Caco-2 (cell line): ENCODE measurements at regions of chr16 and their contacts with region 1.

Region 1: DNA sequence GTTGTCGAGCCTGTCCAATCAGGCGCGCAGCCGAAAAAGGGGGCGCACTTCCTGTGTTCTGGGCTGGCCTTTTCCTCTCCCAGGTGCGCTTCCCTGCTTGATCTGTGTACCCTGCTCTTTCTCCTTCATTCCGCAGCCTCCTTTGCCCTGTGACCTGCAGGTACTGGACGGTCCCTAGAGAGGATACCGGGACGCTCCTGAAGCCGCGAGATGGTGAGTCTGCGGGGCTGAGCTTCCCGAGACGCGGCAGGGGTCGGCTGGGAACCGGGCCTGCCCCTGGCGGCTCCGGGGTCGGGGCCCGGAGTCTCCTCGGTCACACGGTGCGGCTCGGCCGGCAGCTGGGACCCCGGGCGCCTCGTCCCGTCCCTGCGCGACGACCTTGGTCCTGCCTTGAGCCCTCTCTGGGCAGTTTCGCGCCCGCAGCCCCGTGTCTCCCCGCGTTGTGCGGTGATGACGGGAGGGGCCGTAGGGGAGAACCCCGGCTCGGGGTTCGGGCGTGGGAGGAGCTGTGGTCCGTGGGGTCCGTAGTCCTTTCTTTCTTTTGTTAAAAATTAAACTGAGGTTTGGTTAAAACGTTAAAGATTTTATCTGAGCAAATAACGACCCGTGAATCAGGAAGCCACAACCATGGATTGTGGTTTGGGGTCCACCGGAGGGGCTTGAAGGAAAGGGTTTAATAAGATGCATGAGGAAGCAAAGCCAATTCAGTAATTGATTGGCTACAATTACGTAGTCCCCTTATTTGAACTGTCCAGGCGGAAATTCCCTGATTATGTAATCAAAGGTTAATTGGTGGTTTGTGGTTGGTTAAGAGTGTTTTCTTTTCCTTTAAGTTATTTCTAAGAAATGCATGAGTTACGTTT is 172.8 kb upstream of the ZNF267 start:
- DNase-seq: peak; percentile 93 to 94
- H3K4me3 ChIP-seq: peak overlapping the region; percentile 67
- H3K4me3 Mint-ChIP-seq: peak overlapping the region; percentile 82
- H3K27ac Mint-ChIP-seq: peak overlapping the region; percentile 77
- H3K4me1 ChIP-seq: peaks cover 6% of the 10 kb centered on the region; the same call in 1 of the 2 replicates
- H3K4me1 Mint-ChIP-seq: peaks cover 8% of the 10 kb centered on the region
- H3K27me3 ChIP-seq: no peaks in the 10 kb centered on the region
- H3K27me3 Mint-ChIP-seq: no peaks in the 10 kb centered on the region
- CTCF ChIP-seq: no peak

Region 2: GRCh38 chr16:31484491-31485171 is 216.1 kb before region 1 on chr16:
- CTCF ChIA-PET with region 1: no interaction called
- POLR2A ChIA-PET with region 1: no interaction called
- intact Hi-C with region 1: loop called (anchors 1 kb)
- DNase-seq: peak; percentile 87 to 93
- H3K4me3 ChIP-seq: peak overlapping the region; percentile 21
- H3K4me3 Mint-ChIP-seq: peak overlapping the region; percentile 67
- H3K27ac Mint-ChIP-seq: peak overlapping the region; percentile 89
- H3K4me1 ChIP-seq: peaks cover 18% of the 10 kb centered on the region
- H3K4me1 Mint-ChIP-seq: no peaks in the 10 kb centered on the region
- H3K27me3 ChIP-seq: no peaks in the 10 kb centered on the region
- H3K27me3 Mint-ChIP-seq: no peaks in the 10 kb centered on the region
- CTCF ChIP-seq: peak in 1 of 2 experiments; percentile 8

Region 3: DNA sequence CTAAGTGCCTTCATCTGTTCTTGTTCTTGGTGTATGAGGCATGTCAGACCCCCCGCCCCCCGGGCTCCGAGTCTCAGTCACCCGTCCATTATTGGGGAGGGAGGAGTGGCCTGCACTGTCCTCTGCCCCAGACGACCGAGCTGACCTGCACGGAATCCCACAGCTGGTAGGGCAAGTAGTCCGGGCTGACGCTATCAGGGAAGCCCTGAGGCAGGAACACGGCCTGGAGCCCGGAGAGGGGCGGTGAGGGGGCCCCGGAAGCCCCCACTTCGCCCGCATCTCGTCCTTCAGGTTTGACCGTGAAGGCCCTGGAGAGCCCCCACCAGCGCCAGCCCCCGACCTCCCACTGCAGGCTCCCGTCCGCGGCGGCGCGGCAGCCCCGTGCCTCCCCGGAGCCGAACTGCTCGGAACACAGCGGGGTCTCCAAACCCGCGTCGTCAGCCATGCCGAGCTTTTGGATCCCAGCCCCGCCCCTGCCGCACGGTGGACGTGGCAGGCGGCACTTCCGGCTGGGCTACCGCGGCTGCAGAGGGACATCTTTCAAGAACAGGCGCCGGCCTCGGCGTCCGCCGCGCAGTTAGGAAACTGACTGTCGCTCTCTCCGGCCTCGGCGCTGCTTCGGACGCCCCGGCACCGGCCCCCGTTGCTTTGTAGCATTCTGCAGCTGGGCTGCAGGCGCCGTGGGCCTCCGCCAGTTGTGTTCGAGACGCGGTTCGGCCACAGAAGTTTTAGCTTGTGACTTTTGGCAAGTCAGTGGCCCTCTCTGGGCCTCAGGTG is 192.6 kb before region 1 on chr16 and contains the start of gene RUSF1:
- CTCF ChIA-PET with region 1: no interaction called
- POLR2A ChIA-PET with region 1: no interaction called
- intact Hi-C with region 1: loop called (anchors 5 kb)
- DNase-seq: peak; percentile 87 to 88
- H3K4me3 ChIP-seq: peak within 1 kb of the TSS; percentile 90
- H3K4me3 Mint-ChIP-seq: peak within 1 kb of the TSS; percentile 92
- H3K27ac Mint-ChIP-seq: peak within 1 kb of the TSS; percentile 95
- H3K4me1 ChIP-seq: no peaks in the 10 kb centered on the region
- H3K4me1 Mint-ChIP-seq: peaks cover 15% of the 10 kb centered on the region
- H3K27me3 ChIP-seq: no peaks in the 10 kb centered on the region
- H3K27me3 Mint-ChIP-seq: no peaks in the 10 kb centered on the region
- CTCF ChIP-seq: no peak
- total RNA-seq, gene RUSF1: 23.5 and 30.5 TPM in 2 replicates

Region 4: GRCh38 chr16:31713071-31713944 is 12.6 kb after region 1 on chr16:
- CTCF ChIA-PET with region 1: no interaction called
- POLR2A ChIA-PET with region 1: interaction called, 7 read pairs
- intact Hi-C with region 1: loop called (anchors 1 kb)
- DNase-seq: peak; percentile 93 to 94
- H3K4me3 ChIP-seq: peak overlapping the region; percentile 77
- H3K4me3 Mint-ChIP-seq: peak overlapping the region; percentile 99
- H3K27ac Mint-ChIP-seq: peak overlapping the region; percentile 100
- H3K4me1 ChIP-seq: no peaks in the 10 kb centered on the region
- H3K4me1 Mint-ChIP-seq: peaks cover 12% of the 10 kb centered on the region
- H3K27me3 ChIP-seq: no peaks in the 10 kb centered on the region
- H3K27me3 Mint-ChIP-seq: no peaks in the 10 kb centered on the region
- CTCF ChIP-seq: no peak